B cell (primary cell): ENCODE measurements at regions of chr6 and their contacts with region 1.

Region 1: GRCh38 chr6:158026054-158026900 is 44.6 kb downstream of the SYNJ2 start:
- DNase-seq: peak; percentile 90
- ATAC-seq: peak; percentile 72
- H3K4me3 ChIP-seq: peak overlapping the region in 4 of 5 experiments; percentile 30 to 53 (median 38)
- H3K4me3 Mint-ChIP-seq: peak overlapping the region; percentile 87
- H3K27ac ChIP-seq: peak overlapping the region; percentile 62 to 63
- H3K27ac Mint-ChIP-seq: peak overlapping the region; percentile 97
- H3K4me1 ChIP-seq: peaks cover 18 to 23% of the 10 kb centered on the region in 2 donors
- H3K4me1 Mint-ChIP-seq: peaks cover 33% of the 10 kb centered on the region
- H3K27me3 ChIP-seq: no peaks in the 10 kb centered on the region
- H3K27me3 Mint-ChIP-seq: no peaks in the 10 kb centered on the region
- CTCF ChIP-seq: peak; percentile 74

Region 2: DNA sequence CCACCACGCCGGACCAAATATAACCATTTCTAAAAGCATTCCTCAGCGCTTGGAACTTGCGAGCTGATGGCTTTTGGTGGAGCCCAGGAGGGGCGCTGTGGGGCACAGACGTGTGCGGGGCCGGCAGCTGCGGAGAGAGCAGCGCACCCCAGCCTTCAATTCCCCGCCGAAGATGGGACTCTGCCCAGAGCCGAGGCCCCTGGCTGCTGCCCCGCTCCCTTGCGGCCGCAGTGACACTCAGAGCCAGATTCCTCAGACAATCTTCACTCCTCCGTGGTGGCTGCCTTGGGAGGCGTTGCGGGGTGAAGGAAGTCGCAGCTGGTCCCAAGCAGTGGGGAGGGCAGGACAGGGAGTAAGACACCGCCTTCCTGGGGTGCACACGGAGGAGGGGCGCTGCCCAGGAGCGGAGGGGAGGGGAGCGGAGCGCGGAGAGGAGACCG is 790.7 kb before region 1 on chr6:
- CTCF ChIA-PET with region 1: no interaction called
- POLR2A ChIA-PET with region 1: no interaction called
- intact Hi-C with region 1: no loop called
- DNase-seq: peak; percentile 66
- ATAC-seq: peak; percentile 63
- H3K4me3 ChIP-seq: peak overlapping the region; percentile 2 to 69 (median 59)
- H3K4me3 Mint-ChIP-seq: peak overlapping the region; percentile 97
- H3K27ac ChIP-seq: no peak overlapping the region
- H3K27ac Mint-ChIP-seq: peak overlapping the region; percentile 77
- H3K4me1 ChIP-seq: peaks cover 18 to 20% of the 10 kb centered on the region in 2 donors
- H3K4me1 Mint-ChIP-seq: peaks cover 22% of the 10 kb centered on the region
- H3K27me3 ChIP-seq: peaks cover 0 to 60% (median 28%) of the 10 kb centered on the region in 4 experiments
- H3K27me3 Mint-ChIP-seq: peaks cover 66% of the 10 kb centered on the region
- CTCF ChIP-seq: peak; percentile 70

Region 3: DNA sequence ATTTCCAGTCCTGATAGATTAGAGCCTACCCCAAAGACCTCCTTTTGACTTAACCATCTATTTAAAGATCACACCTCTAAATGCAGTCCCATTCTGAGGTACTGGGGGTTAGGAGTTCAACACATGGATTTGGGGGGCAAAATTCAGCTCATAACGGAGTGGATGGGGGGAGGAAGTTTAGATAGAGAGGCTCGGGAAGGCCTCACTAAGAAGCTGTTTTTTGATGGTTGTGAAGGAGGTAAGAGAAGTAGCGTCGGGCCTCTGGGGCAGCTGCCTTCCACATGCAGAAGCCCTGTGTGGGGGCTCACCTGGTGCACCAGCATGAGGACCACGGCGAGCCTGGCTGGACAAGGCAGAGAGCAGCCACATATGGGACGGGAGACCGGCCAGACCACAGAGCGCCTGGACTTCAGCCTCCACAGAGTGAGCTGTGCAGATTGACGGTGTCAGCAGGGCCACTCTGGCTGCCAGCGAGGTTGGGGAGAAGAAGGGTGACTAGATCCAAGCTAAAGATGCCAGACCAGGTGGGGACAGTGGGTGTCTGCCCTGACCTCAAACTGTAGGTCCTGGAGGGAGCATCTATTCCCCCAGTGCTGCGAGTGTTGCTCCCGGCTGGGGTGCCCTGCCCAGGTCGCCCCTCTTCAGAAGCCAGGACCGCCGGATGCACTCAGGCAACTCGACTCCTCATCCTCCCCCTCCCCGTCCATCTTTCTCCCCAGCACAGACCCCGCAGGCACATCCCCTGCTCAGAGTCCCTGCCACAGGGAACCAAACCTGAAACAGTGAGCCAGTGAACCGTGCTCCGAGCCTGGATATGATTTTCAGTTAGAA is 49.7 kb before region 1 on chr6:
- CTCF ChIA-PET with region 1: interaction called, 27 read pairs
- POLR2A ChIA-PET with region 1: no interaction called
- intact Hi-C with region 1: no loop called
- DNase-seq: no peak
- ATAC-seq: no peak
- H3K4me3 ChIP-seq: no peak overlapping the region
- H3K4me3 Mint-ChIP-seq: no peak overlapping the region
- H3K27ac ChIP-seq: no peak overlapping the region
- H3K27ac Mint-ChIP-seq: no peak overlapping the region
- H3K4me1 ChIP-seq: peaks cover 5 to 15% of the 10 kb centered on the region in 2 donors
- H3K4me1 Mint-ChIP-seq: peaks cover 12% of the 10 kb centered on the region
- H3K27me3 ChIP-seq: no peaks in the 10 kb centered on the region
- H3K27me3 Mint-ChIP-seq: no peaks in the 10 kb centered on the region
- CTCF ChIP-seq: no peak

Region 4: DNA sequence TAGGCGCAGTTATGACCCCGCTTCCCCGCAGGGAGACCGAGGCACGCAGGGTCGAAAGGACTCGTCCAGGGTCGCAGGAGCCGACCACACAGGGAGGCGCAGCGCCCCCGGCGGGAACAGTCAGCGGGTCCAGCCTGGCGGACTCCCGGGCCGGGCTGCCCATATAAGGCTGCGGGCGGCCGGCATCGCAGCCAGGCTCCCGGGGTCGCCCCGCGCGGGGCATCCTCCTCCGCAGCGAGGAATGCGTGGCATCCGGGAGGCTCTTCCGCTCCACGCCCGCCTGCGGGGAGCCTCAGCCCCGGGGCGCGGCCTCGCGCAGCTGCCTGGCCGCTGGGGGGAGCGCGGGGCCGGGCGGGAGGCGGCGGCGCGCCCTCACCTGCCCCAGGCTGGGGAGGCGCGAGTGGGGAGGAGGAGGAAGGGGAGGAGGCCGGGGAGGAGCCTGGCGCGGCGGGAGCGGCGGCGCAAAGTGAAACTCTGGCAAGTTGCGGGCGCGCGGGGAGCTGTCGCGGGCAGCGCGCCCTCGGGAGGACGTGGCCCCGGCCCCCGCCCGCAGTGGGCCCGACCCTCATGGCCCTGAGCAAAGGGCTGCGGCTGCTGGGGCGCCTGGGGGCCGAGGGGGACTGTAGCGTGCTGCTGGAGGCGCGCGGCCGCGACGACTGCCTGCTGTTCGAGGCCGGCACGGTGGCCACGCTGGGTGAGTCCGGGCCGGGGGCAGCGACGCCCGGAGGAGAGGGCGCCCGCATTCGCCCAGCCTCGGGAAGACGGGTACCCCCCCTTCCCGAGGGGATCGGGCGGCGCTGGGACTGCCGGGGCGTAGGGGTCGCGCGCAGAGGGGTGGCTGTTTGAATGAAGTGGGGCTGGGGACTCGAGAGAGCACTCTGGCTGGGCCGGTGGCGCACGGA is 44.6 kb before region 1 on chr6 and contains the start of gene SYNJ2:
- CTCF ChIA-PET with region 1: interaction called, 27 read pairs
- POLR2A ChIA-PET with region 1: no interaction called
- intact Hi-C with region 1: loop called (anchors 1 kb)
- DNase-seq: peak; percentile 89
- ATAC-seq: peak; percentile 89
- H3K4me3 ChIP-seq: peak within 1 kb of the TSS; percentile 50 to 87 (median 77)
- H3K4me3 Mint-ChIP-seq: peak within 1 kb of the TSS; percentile 93
- H3K27ac ChIP-seq: peak within 1 kb of the TSS in 1 of 2 donors; percentile 72
- H3K27ac Mint-ChIP-seq: peak within 1 kb of the TSS; percentile 85
- H3K4me1 ChIP-seq: peaks cover 30 to 48% of the 10 kb centered on the region in 2 donors
- H3K4me1 Mint-ChIP-seq: peaks cover 40% of the 10 kb centered on the region
- H3K27me3 ChIP-seq: no peaks in the 10 kb centered on the region
- H3K27me3 Mint-ChIP-seq: no peaks in the 10 kb centered on the region
- CTCF ChIP-seq: peak; percentile 66
- total RNA-seq, gene SYNJ2: 11.4 and 12.8 TPM in 2 replicates

Region 5: DNA sequence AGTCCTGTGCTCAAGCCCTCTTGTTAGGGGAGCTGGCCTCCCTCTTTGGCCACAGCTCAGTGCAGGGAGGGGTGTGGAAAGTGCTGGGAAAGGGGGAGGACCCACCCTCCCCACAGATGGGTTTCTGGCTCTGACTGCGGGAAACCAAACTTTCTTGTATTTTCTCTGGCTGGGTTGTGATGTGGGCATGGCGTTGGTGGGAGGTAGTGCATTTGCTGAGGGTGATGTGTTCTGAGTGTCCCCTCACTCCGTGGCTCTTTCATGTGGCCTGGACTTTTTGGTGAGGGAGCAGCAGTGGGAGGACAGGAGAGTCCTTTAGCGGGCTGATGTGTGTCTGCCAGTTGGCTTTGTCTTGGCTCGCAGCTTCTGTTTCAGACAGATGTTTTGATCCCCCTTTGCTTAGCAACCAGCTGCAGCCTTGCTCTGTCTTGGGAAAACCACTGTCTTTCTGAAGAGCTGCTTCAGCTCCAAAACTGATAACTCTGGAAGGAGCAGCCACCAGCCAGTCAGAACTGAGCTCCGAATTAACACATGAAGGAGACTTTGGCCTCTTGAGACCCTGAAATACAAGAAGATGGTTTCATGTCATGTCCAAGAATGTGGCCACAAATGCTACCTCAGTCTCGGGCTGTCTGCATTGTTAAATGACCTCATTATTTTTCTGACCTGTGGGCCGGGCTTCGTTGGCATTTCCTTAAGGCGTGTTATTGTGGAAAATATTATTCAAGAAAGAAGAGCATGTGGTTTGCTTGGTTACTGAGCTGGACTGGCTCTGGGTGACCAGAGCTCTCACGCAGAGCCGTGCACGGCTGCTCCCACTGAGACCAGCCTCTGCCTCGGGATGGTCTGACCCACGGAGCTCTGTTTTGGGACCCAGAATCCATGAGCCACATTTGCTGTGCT is 23.1 kb before region 1 on chr6:
- CTCF ChIA-PET with region 1: no interaction called
- POLR2A ChIA-PET with region 1: no interaction called
- intact Hi-C with region 1: no loop called
- DNase-seq: no peak
- ATAC-seq: no peak
- H3K4me3 ChIP-seq: no peak overlapping the region
- H3K4me3 Mint-ChIP-seq: no peak overlapping the region
- H3K27ac ChIP-seq: no peak overlapping the region
- H3K27ac Mint-ChIP-seq: no peak overlapping the region
- H3K4me1 ChIP-seq: no peaks in the 10 kb centered on the region
- H3K4me1 Mint-ChIP-seq: peaks cover 4% of the 10 kb centered on the region
- H3K27me3 ChIP-seq: no peaks in the 10 kb centered on the region
- H3K27me3 Mint-ChIP-seq: no peaks in the 10 kb centered on the region
- CTCF ChIP-seq: no peak